ENCODE measurements at regions of chr4 and their contacts with region 1.

Region 1: GRCh38 chr4:155419266-155419665 is 42.5 kb upstream of the MAP9 start:
- DNase-seq: no peak

Region 2: GRCh38 chr4:154218051-154218450 is 1201.2 kb before region 1 on chr4:
- intact Hi-C with region 1: no loop called
- DNase-seq: no peak

Region 3: GRCh38 chr4:155383545-155383944 is 35.7 kb before region 1 on chr4:
- intact Hi-C with region 1: loop called (anchors 2 kb)
- DNase-seq: peak in 1 of 10 donors; percentile 43